ENCODE measurements at regions of chr1 and their contacts with region 1.

Region 1: DNA sequence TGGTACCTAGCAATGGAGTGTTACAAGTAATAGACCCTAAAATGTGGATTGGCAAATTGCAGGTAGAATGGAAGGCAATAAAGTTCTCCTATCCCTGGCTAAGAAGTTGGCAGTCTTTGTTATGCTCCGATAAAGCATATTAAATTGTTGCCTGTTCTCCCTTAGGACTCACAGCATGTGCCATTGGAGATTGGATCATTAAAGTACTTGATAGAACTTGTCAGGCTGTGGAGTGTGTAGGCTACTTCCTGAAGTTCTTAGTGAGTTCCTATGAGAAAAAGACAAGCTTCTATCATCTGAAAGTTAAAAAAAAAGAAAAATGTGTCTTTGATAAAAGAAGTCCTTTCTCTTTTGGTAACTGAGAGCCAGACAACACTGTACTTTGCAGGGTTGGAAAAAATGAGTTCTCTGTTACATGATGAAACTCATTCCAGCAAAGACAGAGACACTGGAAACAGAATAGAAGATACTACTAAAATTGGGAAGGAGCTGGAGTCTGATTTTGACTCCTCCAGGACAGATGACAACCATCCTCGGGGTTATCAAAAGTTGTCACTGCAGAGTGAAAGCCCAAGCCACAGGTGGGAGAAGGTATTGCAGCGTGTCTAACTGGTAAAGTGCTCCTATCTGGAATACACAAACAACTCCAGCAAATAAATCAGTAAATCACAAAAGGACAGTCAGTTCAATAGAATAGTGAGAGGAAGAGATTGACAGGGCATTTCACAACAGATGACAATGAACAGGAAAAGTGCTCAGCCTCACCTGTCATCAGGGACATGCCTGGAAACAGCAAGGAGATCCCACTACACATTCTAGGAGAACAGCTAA is 87.5 kb upstream of the WDR26 start:
- DNase-seq: no peak
- H3K4me3 ChIP-seq: no peak overlapping the region
- H3K27ac ChIP-seq: no peak overlapping the region
- H3K4me1 ChIP-seq: peaks cover 14% of the 10 kb centered on the region
- H3K27me3 ChIP-seq: no peaks in the 10 kb centered on the region
- CTCF ChIP-seq: no peak

Region 2: GRCh38 chr1:224482619-224483018 is 39.5 kb before region 1 on chr1:
- CTCF ChIA-PET with region 1: no interaction called
- POLR2A ChIA-PET with region 1: no interaction called
- intact Hi-C with region 1: no loop called
- DNase-seq: peak; percentile 10
- H3K4me3 ChIP-seq: no peak overlapping the region
- H3K27ac ChIP-seq: no peak overlapping the region
- H3K4me1 ChIP-seq: no peaks in the 10 kb centered on the region
- H3K27me3 ChIP-seq: no peaks in the 10 kb centered on the region
- CTCF ChIP-seq: no peak

Region 3: DNA sequence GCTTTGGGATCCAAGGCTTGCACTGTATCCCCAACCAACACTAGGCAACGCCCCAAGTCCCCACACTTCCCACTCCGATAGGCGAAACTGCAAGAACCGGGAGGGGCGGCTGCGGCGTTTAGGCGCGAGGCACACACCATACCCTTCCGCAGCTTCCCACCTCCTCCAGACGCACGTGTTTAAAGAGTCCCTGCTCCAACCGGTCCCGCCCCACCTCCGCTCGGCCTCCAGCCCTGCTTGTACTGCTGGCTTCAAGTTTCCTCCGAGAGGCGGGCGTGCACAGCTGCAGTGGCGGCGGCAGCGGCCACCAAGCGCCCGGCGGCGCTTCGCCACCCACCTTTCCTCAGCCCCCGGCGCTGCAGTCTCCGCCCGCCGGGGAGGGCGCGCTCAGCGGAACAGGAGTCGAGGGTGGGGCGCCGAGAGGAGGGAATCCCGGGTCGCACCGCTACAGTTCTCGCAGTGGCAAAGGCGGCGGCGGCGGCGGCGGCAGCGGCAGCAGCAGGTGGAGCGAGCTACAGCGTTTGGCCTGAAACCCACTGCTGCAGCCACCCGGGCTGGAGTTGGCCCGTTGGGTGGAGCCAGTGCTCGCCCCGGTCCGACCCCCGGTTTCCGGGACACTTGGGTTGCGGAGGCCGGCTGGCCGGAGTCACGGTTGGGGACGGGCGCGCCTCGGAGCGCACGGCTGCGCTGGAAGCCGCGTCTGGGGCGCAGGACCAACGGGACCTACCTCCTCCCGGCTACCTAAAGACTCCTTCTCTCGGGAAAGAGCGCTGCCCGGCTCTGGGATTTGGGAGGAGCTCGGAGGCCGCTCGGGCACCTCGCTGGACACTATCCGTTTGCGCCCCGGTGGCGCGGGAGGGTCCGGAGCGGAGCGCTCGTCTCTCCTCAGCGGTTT is 94.0 kb after region 1 on chr1 and contains the start of gene CNIH3:
- CTCF ChIA-PET with region 1: no interaction called
- POLR2A ChIA-PET with region 1: no interaction called
- intact Hi-C with region 1: loop called (anchors 5 kb)
- DNase-seq: peak; percentile 71
- H3K4me3 ChIP-seq: peak within 1 kb of the TSS; percentile 42
- H3K27ac ChIP-seq: no peak within 1 kb of the TSS
- H3K4me1 ChIP-seq: peaks cover 6% of the 10 kb centered on the region
- H3K27me3 ChIP-seq: peaks cover 62% of the 10 kb centered on the region
- CTCF ChIP-seq: no peak
- total RNA-seq, gene CNIH3: 3.7 and 3.8 TPM in 2 replicates

Region 4: DNA sequence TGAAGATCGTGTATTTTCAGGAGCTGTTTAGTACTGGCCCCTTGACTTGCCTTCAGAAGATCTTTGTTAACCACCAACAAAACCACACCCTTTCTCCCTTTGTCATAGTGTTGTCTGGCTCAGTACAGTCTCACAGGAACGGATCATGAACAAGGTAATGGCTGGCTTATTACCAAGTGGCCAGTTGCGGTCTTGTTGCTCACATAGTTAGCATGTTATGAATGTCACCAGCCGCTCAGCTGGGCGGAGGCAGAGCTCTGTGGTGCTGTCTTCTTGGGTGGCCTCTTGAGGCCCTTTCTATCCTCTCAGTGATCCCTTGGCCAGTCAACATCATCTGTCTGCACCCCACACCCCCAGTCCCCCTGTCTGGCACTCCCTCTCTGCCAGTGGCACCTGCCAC is 115.4 kb after region 1 on chr1:
- CTCF ChIA-PET with region 1: no interaction called
- POLR2A ChIA-PET with region 1: no interaction called
- intact Hi-C with region 1: loop called (anchors 5 kb)
- DNase-seq: peak; percentile 45
- H3K4me3 ChIP-seq: no peak overlapping the region
- H3K27ac ChIP-seq: no peak overlapping the region
- H3K4me1 ChIP-seq: peaks cover 23% of the 10 kb centered on the region
- H3K27me3 ChIP-seq: no peaks in the 10 kb centered on the region
- CTCF ChIP-seq: no peak